ENCODE measurements at regions of chr2 and their contacts with region 1.

Region 1: DNA sequence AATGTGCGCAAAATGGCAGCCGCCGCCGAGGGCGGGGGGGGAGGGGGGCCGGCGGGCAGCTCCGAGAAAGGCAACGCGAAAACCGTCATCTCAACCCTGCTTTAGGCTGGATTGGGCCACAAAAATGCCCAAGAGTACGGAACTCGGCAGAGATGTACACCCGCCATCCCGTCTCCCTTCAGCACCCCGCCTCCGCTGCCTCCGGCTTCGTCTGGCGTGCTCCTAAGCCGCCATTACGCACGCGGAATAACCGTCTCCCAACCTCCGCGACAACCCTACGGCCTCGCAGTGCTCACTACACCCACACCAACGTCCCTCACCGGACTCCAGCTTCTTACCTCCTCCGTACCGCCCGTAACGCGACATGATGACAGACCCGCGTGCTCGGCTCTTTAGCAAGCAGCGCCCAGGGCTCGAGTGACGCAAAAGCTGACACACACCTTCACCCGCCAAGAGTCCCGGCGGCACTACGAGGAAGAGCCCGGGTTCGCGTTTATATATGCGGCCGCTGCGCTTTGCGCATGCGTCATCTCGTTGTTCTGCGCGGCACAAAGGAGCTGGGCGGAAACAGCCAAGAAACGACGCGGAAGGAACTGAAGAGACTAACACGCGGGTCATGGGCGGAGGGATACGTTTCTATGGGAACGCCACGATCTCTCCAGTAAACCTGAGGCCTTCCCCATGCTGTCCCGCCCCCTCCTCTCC is at the start of gene SRSF7:
- DNase-seq: peak; percentile 98
- H3K4me3 ChIP-seq: peak within 1 kb of the TSS; percentile 88
- H3K27ac ChIP-seq: peak within 1 kb of the TSS; percentile 80
- H3K4me1 ChIP-seq: peaks cover 55% of the 10 kb centered on the region
- CTCF ChIP-seq: no peak
- total RNA-seq, gene SRSF7: 316 and 337 TPM in 2 replicates

Region 2: GRCh38 chr2:38535744-38536506 is 215.1 kb before region 1 on chr2:
- CTCF ChIA-PET with region 1: no interaction called
- POLR2A ChIA-PET with region 1: interaction called, 36 read pairs
- intact Hi-C with region 1: no loop called
- DNase-seq: peak; percentile 87
- H3K4me3 ChIP-seq: peak overlapping the region; percentile 62
- H3K27ac ChIP-seq: no peak overlapping the region
- H3K4me1 ChIP-seq: peaks cover 43% of the 10 kb centered on the region
- CTCF ChIP-seq: peak; percentile 87

Region 3: GRCh38 chr2:38734299-38735058 is 16.6 kb before region 1 on chr2:
- CTCF ChIA-PET with region 1: no interaction called
- POLR2A ChIA-PET with region 1: interaction called, 28 read pairs
- intact Hi-C with region 1: no loop called
- DNase-seq: no peak
- H3K4me3 ChIP-seq: no peak overlapping the region
- H3K27ac ChIP-seq: no peak overlapping the region
- H3K4me1 ChIP-seq: peaks cover 14% of the 10 kb centered on the region
- CTCF ChIP-seq: no peak

Region 4: DNA sequence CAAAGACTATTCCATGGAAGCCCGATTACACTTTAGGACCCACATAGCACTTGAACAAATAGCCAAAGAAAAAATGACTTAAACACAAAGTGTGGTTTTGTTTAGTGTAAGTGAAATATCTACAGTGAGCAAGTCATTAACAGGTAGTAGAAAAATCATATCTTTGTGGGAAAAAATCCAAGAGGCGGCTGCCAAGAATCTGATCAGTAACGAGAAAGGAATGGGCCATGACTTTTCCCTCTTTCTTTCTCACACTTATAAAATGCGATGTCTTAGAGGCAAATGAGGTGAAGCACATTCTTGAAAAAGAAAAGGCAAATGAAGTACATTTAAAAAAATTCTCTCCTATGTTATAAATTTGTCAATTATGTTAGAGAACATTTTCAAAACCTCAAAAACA is 14.1 kb after region 1 on chr2:
- CTCF ChIA-PET with region 1: no interaction called
- POLR2A ChIA-PET with region 1: interaction called, 16 read pairs
- intact Hi-C with region 1: no loop called
- DNase-seq: no peak
- H3K4me3 ChIP-seq: no peak overlapping the region
- H3K27ac ChIP-seq: no peak overlapping the region
- H3K4me1 ChIP-seq: no peaks in the 10 kb centered on the region
- CTCF ChIP-seq: no peak

Region 5: GRCh38 chr2:38778687-38779082 is 27.6 kb after region 1 on chr2:
- CTCF ChIA-PET with region 1: no interaction called
- POLR2A ChIA-PET with region 1: interaction called, 21 read pairs
- intact Hi-C with region 1: no loop called
- DNase-seq: peak; percentile 17
- H3K4me3 ChIP-seq: peak overlapping the region; percentile 84
- H3K27ac ChIP-seq: peak overlapping the region; percentile 33
- H3K4me1 ChIP-seq: peaks cover 7% of the 10 kb centered on the region
- CTCF ChIP-seq: 0 out of 2 replicates have a peak, but pooled peaks have one; percentile 4